Sciatic nerve (tissue), 2 donors: ENCODE measurements at regions of chr9 and their contacts with region 1.

Region 1: DNA sequence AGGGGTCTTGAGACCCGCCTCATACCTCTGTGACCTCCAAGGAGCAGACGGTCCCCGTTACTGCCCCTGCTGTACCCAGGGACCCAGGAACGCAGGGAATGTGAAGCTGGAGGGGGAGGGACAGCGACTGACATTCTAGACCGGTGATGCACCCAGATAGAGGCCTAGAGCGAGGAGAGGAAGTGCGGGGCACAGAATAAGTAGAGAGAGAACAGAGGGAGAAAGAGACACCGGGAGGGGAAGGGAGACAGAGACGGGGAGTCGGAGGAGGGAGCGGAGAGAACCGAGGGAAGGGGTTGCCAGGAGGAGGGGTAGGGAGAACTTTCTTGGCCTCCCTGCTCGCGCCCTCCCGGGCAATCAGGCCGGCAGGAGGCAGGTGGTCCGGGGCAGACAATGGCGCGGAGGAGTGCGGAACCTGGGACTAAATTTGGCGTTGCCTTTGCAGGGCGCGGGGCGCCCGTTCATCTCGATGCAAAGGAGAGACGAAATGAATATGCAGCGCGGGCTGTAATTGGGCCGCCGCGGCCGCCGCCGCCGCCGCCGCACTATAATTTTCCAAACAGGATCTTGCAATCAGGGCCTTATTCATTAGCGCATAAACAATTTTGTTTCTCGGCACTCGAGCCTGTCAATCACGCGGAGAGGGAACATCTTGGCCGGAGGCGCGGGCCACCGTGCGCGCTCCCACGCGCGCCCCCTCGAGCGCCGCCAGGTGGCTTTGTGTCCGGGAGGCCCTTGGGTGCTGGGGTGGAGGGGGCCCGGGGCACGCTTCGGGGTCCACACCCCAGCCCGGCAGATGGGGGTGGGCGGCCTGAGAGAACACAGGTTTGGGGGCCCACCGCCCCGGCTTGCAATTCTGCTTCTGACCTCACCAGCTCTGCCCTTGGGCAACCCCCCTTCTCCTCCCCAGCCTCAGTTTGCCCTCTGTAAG is 33.0 kb downstream of the NDUFA8 start:
- DNase-seq: peak; percentile 47
- ATAC-seq: no peak

Region 2: GRCh38 chr9:122200960-122201595 is 74.5 kb after region 1 on chr9:
- intact Hi-C with region 1: loop called (anchors 2 kb)
- DNase-seq: no peak
- ATAC-seq: no peak

Region 3: GRCh38 chr9:122346478-122347362 is 220.1 kb after region 1 on chr9:
- intact Hi-C with region 1: loop called (anchors 2 kb)
- DNase-seq: peak; percentile 62
- ATAC-seq: peak; percentile 48